Activated CD4-positive, alpha-beta T cell treated with anti-CD3 and anti-CD28 coated beads for 36 hours (primary cell): ENCODE measurements at regions of chr14 and their contacts with region 1.

Region 1: GRCh38 chr14:35708073-35708472 is 101.0 kb downstream of the RALGAPA1 start:
- DNase-seq: no peak
- ATAC-seq: no peak
- H3K4me3 Mint-ChIP-seq: no peak overlapping the region
- H3K27ac Mint-ChIP-seq: no peak overlapping the region
- H3K4me1 Mint-ChIP-seq: peaks cover 8% of the 10 kb centered on the region
- H3K27me3 Mint-ChIP-seq: no peaks in the 10 kb centered on the region

Region 2: GRCh38 chr14:35088514-35088913 is 619.6 kb before region 1 on chr14:
- CTCF ChIA-PET with region 1: no interaction called
- POLR2A ChIA-PET with region 1: interaction called, 12 read pairs
- intact Hi-C with region 1: no loop called
- DNase-seq: no peak
- ATAC-seq: no peak
- H3K4me3 Mint-ChIP-seq: no peak overlapping the region
- H3K27ac Mint-ChIP-seq: peak overlapping the region; percentile 15
- H3K4me1 Mint-ChIP-seq: no peaks in the 10 kb centered on the region
- H3K27me3 Mint-ChIP-seq: no peaks in the 10 kb centered on the region